ENCODE measurements at regions of chr3 and their contacts with region 1.

Region 1: GRCh38 chr3:71583566-71584449 is at the start of gene FOXP1:
- DNase-seq: peak; percentile 49 to 92 (median 68)
- ATAC-seq: peak; percentile 54
- H3K4me3 ChIP-seq: peak within 1 kb of the TSS; percentile 81
- H3K4me3 Mint-ChIP-seq: peak within 1 kb of the TSS; percentile 95
- H3K27ac ChIP-seq: peak within 1 kb of the TSS; percentile 78 to 80
- H3K27ac Mint-ChIP-seq: peak within 1 kb of the TSS; percentile 85
- H3K4me1 ChIP-seq: peaks cover 25% of the 10 kb centered on the region
- H3K4me1 Mint-ChIP-seq: peaks cover 48% of the 10 kb centered on the region
- H3K27me3 ChIP-seq: no peaks in the 10 kb centered on the region
- H3K27me3 Mint-ChIP-seq: no peaks in the 10 kb centered on the region
- CTCF ChIP-seq: no peak
- total RNA-seq, gene FOXP1: 493 to 508 TPM

Region 2: DNA sequence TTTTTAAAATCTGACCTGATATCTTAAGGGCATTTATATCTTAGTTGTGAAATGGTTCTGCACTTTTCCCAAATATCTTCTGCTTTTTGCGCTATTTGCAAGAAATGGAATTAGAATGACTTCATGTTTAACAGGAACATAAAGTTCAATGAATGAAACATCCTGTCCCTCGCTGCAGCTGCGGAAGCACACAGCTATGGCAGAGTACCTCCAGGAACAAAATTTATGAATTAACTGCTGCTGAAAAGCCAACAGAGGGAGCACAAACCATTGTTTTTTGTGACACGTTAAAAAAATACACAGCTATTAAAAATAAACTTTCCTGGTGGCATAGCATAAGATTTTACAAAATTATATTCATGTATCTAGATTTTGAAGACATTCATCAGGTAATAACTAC is 867.0 kb before region 1 on chr3:
- CTCF ChIA-PET with region 1: no interaction called
- POLR2A ChIA-PET with region 1: no interaction called
- intact Hi-C with region 1: loop called in 1 of 2 experiments (anchors 5 kb)
- DNase-seq: peak in 5 of 14 experiments; percentile 0 to 25 (median 7)
- ATAC-seq: no peak
- H3K4me3 ChIP-seq: no peak overlapping the region
- H3K4me3 Mint-ChIP-seq: no peak overlapping the region
- H3K27ac ChIP-seq: no peak overlapping the region
- H3K27ac Mint-ChIP-seq: no peak overlapping the region
- H3K4me1 ChIP-seq: no peaks in the 10 kb centered on the region
- H3K4me1 Mint-ChIP-seq: no peaks in the 10 kb centered on the region
- H3K27me3 ChIP-seq: peaks cover 0 to 6% of the 10 kb centered on the region in 2 experiments
- H3K27me3 Mint-ChIP-seq: peaks cover 4% of the 10 kb centered on the region
- CTCF ChIP-seq: no peak

Region 3: GRCh38 chr3:71069797-71070196 is 514.0 kb before region 1 on chr3:
- CTCF ChIA-PET with region 1: no interaction called
- POLR2A ChIA-PET with region 1: interaction called, 10 read pairs
- intact Hi-C with region 1: loop called (anchors 5 kb)
- DNase-seq: peak; percentile 52 to 84 (median 70)
- ATAC-seq: peak; percentile 24
- H3K4me3 ChIP-seq: no peak overlapping the region
- H3K4me3 Mint-ChIP-seq: peak overlapping the region; percentile 57
- H3K27ac ChIP-seq: peak overlapping the region in 1 of 2 donors; percentile 18
- H3K27ac Mint-ChIP-seq: peak overlapping the region; percentile 86
- H3K4me1 ChIP-seq: peaks cover 57% of the 10 kb centered on the region
- H3K4me1 Mint-ChIP-seq: peaks cover 78% of the 10 kb centered on the region
- H3K27me3 ChIP-seq: no peaks in the 10 kb centered on the region
- H3K27me3 Mint-ChIP-seq: no peaks in the 10 kb centered on the region
- CTCF ChIP-seq: peak; percentile 74

Region 4: GRCh38 chr3:71369701-71370391 is 214.0 kb before region 1 on chr3:
- CTCF ChIA-PET with region 1: no interaction called
- POLR2A ChIA-PET with region 1: interaction called, 3 read pairs
- intact Hi-C with region 1: loop called in 1 of 2 experiments (anchors 1 kb)
- DNase-seq: no peak
- ATAC-seq: no peak
- H3K4me3 ChIP-seq: no peak overlapping the region
- H3K4me3 Mint-ChIP-seq: no peak overlapping the region
- H3K27ac ChIP-seq: no peak overlapping the region
- H3K27ac Mint-ChIP-seq: peak overlapping the region; percentile 87
- H3K4me1 ChIP-seq: peaks cover 41% of the 10 kb centered on the region
- H3K4me1 Mint-ChIP-seq: peaks cover 82% of the 10 kb centered on the region
- H3K27me3 ChIP-seq: no peaks in the 10 kb centered on the region
- H3K27me3 Mint-ChIP-seq: no peaks in the 10 kb centered on the region
- CTCF ChIP-seq: no peak

Region 5: DNA sequence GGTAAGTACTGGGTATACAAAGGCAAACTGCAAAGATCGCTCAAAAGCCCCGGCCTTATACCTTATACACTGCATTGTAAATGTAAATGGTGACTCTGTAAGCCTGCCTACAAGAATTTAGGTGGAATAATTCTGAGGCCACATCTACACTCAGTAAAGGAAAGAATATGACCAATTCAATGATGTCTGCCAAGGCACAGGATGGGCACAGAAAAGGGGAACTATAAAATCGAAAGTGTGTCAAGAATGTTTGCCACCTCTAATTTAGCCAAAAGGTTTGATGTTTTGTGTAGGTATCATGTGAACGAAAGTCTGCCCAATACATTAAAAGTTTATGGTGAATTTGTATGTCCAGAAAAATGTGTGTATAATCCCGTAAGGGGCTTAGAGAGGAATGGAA is 96.4 kb before region 1 on chr3:
- CTCF ChIA-PET with region 1: interaction called, 4 read pairs
- POLR2A ChIA-PET with region 1: interaction called, 4 read pairs
- intact Hi-C with region 1: loop called in 1 of 2 experiments (anchors 5 kb)
- DNase-seq: peak in 2 of 14 experiments; percentile 43 to 65
- ATAC-seq: no peak
- H3K4me3 ChIP-seq: peak overlapping the region; percentile 28
- H3K4me3 Mint-ChIP-seq: peak overlapping the region; percentile 84
- H3K27ac ChIP-seq: peak overlapping the region; percentile 78 to 88
- H3K27ac Mint-ChIP-seq: peak overlapping the region; percentile 95
- H3K4me1 ChIP-seq: peaks cover 72% of the 10 kb centered on the region
- H3K4me1 Mint-ChIP-seq: peaks cover 94% of the 10 kb centered on the region
- H3K27me3 ChIP-seq: no peaks in the 10 kb centered on the region
- H3K27me3 Mint-ChIP-seq: no peaks in the 10 kb centered on the region
- CTCF ChIP-seq: no peak

Region 6: DNA sequence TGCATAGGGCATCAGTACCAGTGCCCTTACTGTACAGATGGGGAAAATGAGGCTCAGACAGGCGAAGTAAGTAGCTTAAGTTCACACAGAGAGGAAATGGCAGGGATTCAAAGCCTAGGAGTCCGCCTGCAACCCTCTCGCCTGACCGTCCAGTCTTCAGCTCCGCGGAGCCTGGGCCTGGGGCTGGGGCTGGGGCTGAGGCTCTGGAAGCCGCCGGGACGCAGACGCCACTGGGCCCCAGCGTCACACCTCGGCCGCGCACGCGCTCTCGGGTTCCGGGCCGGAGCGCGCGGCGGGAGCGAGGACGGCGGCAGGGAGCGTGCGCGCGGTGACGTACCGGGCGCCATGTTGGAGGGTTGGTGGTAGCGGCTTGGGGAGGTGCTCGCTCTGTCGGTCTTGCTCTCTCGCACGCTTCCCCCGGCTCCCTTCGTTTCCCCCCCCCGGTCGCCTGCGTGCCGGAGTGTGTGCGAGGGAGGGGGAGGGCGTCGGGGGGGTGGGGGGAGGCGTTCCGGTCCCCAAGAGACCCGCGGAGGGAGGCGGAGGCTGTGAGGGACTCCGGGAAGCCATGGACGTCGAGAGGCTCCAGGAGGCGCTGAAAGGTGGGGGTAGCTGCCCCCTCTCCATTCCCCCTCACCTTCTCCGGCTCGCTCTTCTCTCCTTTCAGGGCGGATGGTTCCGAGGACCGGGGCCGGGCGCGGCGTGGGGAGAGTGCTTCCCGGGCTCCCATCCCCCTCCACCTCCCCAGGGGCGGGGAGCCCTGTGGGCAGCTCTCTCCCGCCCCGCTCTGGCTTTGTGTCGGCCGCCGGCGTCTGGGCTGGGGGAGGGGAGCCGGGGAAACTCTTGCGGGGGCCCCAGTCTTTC is 1412.9 kb after region 1 on chr3 and contains the start of gene PPP4R2:
- CTCF ChIA-PET with region 1: no interaction called
- POLR2A ChIA-PET with region 1: no interaction called
- intact Hi-C with region 1: loop called in 1 of 2 experiments (anchors 10 kb)
- DNase-seq: peak; percentile 83 to 98 (median 90)
- ATAC-seq: peak; percentile 85
- H3K4me3 ChIP-seq: peak within 1 kb of the TSS; percentile 90
- H3K4me3 Mint-ChIP-seq: peak within 1 kb of the TSS; percentile 88
- H3K27ac ChIP-seq: peak within 1 kb of the TSS; percentile 89 to 93
- H3K27ac Mint-ChIP-seq: peak within 1 kb of the TSS; percentile 86
- H3K4me1 ChIP-seq: peaks cover 29% of the 10 kb centered on the region
- H3K4me1 Mint-ChIP-seq: peaks cover 48% of the 10 kb centered on the region
- H3K27me3 ChIP-seq: no peaks in the 10 kb centered on the region
- H3K27me3 Mint-ChIP-seq: no peaks in the 10 kb centered on the region
- CTCF ChIP-seq: no peak
- total RNA-seq, gene PPP4R2: 67.8 to 80.3 TPM